Activated B cell treated with CpG ODN at 0.5 μM for 24 hours (primary cell): ENCODE measurements at regions of chr4 and their contacts with region 1.

Region 1: DNA sequence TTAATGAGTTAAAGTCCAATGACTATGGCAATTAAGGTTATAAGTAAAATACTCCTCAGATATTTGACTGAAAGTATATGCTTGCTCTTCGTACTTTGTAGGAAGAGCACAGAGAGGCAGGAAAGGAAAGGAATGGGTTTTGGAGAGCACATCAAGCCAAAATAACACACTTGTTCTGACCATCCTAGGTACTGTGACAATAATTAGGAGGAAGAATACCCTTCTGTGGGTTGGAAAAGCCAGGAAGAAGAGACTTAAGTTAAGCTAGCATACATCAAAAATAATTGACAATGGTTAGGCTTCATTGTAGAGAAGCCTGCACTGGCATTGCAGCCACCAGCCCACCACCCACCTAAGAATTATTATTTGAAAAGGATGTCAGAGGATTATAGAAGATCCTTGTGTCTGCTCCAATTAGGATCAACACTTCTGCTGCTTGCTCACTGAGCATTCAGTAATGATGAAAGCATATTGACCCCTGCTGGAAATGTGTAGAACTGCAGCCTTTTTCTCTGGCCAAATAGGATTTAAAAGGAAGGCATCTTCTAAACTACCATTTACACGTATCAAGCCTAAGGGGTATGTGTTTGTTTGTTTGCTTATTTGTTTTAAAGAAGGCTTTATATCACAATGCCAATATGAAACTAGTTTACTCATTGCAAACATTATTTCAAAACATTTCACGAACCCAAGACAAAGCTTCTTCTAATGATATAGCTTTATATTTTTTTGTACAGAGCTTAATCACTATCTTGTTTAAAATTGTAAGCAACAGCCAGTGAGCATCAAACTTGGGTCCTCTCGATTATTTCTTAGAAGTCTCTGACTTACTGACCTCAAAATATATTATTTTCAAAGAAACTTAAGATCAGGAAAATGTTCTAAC is 286.2 kb upstream of the TET2 start:
- DNase-seq: no peak
- ATAC-seq: peak; percentile 70
- H3K4me3 Mint-ChIP-seq: no peak overlapping the region
- H3K27ac Mint-ChIP-seq: no peak overlapping the region
- H3K4me1 Mint-ChIP-seq: no peaks in the 10 kb centered on the region
- H3K27me3 Mint-ChIP-seq: peaks cover 2% of the 10 kb centered on the region
- CTCF ChIP-seq: peak; percentile 96

Region 2: DNA sequence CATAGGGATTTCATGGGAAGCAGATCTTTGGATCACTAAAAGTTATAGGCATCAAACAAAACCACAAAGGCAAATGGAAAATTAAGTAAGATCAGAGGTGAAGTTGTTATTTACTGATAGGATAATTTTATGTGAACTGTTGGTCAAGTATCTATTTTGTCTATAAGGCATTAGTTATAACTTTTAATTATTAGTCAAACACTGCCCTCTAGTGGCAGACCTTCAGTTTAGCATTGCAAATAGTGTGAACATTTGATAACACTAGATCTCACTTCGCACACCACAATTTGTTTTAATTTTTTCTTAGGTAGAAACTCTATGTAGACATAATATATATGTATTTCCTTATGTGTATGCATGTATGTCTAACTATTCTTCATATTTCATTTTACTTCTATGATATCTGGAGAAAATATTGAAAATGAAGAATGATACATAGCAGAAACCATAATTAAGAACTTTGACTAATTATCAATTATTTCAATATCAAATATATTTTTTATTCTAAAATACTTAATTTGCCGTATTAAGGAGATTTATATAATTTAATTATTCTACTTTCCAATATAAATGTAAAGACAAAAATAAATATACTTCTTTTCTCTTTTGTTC is 926.2 kb before region 1 on chr4:
- CTCF ChIA-PET with region 1: no interaction called
- POLR2A ChIA-PET with region 1: no interaction called
- intact Hi-C with region 1: loop called (anchors 2 kb)
- DNase-seq: no peak
- ATAC-seq: no peak
- H3K4me3 Mint-ChIP-seq: no peak overlapping the region
- H3K27ac Mint-ChIP-seq: no peak overlapping the region
- H3K4me1 Mint-ChIP-seq: no peaks in the 10 kb centered on the region
- H3K27me3 Mint-ChIP-seq: no peaks in the 10 kb centered on the region
- CTCF ChIP-seq: peak; percentile 88

Region 3: DNA sequence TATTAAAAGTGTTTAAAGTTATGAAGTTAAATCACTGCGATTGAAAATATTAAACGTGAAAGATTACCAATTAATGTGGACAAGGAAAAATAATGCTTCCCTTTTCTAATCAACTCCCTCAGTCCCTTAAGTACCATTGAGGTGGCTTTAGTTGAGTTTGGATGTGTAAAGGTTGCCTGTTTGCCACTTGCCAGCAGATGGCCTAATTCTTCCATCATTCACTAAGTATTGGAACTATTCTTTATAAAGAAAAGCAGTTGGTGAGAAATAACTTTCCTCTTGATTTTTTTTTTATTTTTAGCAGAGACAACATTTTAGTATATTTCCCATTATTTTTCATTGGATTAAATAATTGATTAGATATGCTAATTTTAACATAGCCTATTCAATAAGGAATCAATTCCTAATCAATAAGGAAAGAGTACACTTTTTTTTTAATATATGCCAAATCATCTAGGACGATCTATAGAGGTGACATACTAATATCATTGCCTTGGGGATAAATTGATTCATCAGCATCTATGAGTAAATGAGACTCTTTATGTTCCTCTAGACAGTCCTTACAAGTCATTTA is 844.7 kb before region 1 on chr4:
- CTCF ChIA-PET with region 1: no interaction called
- POLR2A ChIA-PET with region 1: no interaction called
- intact Hi-C with region 1: loop called (anchors 1 kb)
- DNase-seq: no peak
- ATAC-seq: no peak
- H3K4me3 Mint-ChIP-seq: no peak overlapping the region
- H3K27ac Mint-ChIP-seq: no peak overlapping the region
- H3K4me1 Mint-ChIP-seq: no peaks in the 10 kb centered on the region
- H3K27me3 Mint-ChIP-seq: no peaks in the 10 kb centered on the region
- CTCF ChIP-seq: no peak

Region 4: DNA sequence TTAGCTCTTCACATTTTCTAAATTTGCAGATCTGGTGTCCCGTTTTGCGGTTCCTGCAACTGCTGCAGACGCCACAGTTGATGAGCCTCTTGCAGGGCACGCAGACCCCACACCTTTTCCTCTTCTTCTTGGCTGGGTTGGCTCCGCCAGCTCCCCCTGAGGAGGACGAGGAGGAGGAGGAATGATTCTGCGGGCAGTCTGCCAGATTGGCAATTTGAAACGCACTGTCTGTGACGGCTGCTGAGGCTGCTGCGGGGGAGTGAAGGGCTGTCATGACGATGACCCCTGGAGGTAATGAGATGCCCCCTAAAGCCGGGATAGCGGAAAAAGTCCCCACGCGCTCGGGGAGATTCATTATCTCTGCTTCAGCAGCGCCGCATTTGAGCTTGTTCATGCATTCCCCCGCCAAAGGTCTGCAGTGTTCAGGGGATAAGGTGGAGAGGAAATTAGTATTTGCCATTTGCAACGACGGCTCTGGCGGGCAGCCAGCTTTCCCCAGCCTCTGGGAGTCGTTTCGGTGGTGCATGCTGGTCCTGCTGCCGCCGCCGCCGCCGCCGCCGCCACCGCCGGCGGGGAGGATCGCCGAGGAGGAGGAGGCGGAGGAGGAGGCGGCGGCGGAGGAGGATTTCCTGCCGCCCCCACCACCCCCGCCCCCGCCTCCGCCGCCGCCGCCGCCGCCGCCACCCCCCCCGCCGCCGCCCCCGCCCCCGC is 369.6 kb before region 1 on chr4:
- CTCF ChIA-PET with region 1: no interaction called
- POLR2A ChIA-PET with region 1: no interaction called
- intact Hi-C with region 1: loop called (anchors 5 kb)
- DNase-seq: no peak
- ATAC-seq: peak; percentile 39
- H3K4me3 Mint-ChIP-seq: peak overlapping the region; percentile 79
- H3K27ac Mint-ChIP-seq: no peak overlapping the region
- H3K4me1 Mint-ChIP-seq: peaks cover 34% of the 10 kb centered on the region
- H3K27me3 Mint-ChIP-seq: peaks cover 46% of the 10 kb centered on the region
- CTCF ChIP-seq: no peak

Region 5: DNA sequence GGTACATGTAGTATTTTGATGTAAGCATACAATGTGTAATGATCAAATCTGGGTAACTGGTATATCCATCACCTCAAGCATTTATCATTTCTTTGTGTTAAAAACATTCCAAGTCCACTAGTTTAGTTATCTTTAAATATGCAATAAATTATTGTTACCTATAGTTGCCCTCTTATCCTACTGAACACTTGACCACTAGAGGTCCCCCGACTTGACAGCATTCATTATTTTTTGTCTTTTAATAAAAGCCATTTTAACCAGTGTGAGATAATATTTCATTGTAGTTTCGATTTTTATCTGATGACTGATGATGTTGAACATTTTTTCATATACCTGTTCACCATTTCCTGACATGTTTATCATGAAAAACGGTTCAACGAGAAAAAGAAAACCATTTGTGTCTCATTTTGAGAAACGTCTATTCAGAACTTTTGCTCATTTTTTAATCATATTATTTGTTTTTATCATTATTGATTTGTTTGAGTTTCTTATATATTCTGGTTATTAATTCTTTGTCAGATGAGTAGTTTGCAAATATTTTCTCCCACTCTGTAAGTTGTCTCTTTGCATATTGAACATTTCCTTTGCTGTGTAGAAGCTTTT is 166.8 kb before region 1 on chr4:
- CTCF ChIA-PET with region 1: interaction called, 12 read pairs
- POLR2A ChIA-PET with region 1: no interaction called
- intact Hi-C with region 1: loop called (anchors 1 kb)
- DNase-seq: no peak
- ATAC-seq: no peak
- H3K4me3 Mint-ChIP-seq: no peak overlapping the region
- H3K27ac Mint-ChIP-seq: no peak overlapping the region
- H3K4me1 Mint-ChIP-seq: no peaks in the 10 kb centered on the region
- H3K27me3 Mint-ChIP-seq: no peaks in the 10 kb centered on the region
- CTCF ChIP-seq: no peak